GM12878 (cell line): ENCODE measurements at regions of chr17 and their contacts with region 1.

Region 1: DNA sequence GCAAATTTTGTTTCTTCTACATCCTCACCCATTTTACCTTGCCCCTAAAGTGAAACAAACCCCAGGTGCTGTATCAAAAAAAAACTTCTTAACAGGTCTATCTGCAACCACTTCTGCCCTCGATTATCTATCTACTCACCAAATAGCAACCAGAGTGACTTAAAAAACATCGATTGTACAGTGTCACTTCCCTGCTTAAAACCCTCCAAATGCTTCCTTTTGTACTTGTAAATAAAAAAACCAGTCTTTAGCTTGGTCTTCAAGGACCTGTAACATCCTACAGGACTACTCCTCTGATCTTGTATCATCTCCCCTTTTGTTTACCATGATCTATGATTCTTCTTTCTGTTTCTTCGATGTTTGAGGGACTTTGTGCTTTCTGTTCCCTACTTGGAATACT is 82.7 kb upstream of the CORO6 start:
- DNase-seq: no peak
- ATAC-seq: peak; percentile 7; the same call in 2 of the 3 replicates
- H3K4me3 ChIP-seq: peak overlapping the region; percentile 43; the same call in 1 of the 2 replicates
- H3K27ac ChIP-seq: peak overlapping the region; percentile 91
- H3K4me1 ChIP-seq: peaks cover 29% of the 10 kb centered on the region
- H3K27me3 ChIP-seq: no peaks in the 10 kb centered on the region
- CTCF ChIP-seq: no peak
- EP300 ChIP-seq: no peak
- POLR2A ChIP-seq: no peak
- RAD21 ChIP-seq: no peak

Region 2: DNA sequence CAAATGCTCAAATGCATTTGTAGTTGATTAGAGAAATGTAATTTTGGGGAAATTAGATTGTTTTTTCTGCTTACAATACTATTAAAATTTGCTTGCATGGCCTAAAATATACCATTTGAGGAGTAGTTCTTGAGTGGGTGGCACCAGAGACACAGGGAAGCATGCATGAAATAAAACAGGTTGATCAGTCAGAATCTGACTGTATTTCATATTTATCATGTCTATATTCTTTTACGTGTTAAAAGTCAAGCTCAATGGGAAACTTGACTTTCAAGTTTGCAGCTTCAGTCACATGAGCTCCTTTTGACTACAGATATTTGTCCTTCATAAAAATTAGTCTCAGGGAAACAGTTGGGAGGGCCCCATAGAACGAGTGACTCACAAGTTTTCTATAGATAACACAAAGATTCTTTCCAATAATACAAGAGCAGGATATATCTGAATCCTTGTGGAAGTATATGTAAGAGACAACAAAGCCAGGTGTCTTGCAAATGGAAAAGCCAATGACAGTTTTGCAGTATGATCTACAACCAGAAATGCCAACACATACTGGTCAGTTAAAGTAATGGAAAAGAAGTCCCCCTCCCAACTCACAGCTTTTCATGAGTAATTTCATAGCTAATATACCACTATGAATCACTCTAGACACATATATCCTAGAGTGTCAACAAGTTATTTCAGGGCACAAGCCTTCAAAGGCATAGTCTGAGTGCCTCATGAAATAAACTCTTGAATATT is 40.5 kb before region 1 on chr17:
- CTCF ChIA-PET with region 1: no interaction called
- POLR2A ChIA-PET with region 1: interaction called, 10 read pairs
- RAD21 ChIA-PET with region 1: interaction called, 4 read pairs
- SMC1A ChIA-PET with region 1: interaction called, 7 read pairs
- in situ Hi-C with region 1: no loop called
- intact Hi-C with region 1: no loop called
- DNase-seq: no peak
- ATAC-seq: peak; percentile 60
- H3K4me3 ChIP-seq: no peak overlapping the region
- H3K27ac ChIP-seq: peak overlapping the region; percentile 4
- H3K4me1 ChIP-seq: peaks cover 8% of the 10 kb centered on the region
- H3K27me3 ChIP-seq: no peaks in the 10 kb centered on the region
- CTCF ChIP-seq: no peak
- EP300 ChIP-seq: no peak
- POLR2A ChIP-seq: no peak
- RAD21 ChIP-seq: no peak

Region 3: GRCh38 chr17:29687596-29687995 is 17.8 kb before region 1 on chr17:
- CTCF ChIA-PET with region 1: interaction called, 18 read pairs
- POLR2A ChIA-PET with region 1: interaction called, 3 read pairs
- RAD21 ChIA-PET with region 1: interaction called, 8 read pairs
- SMC1A ChIA-PET with region 1: interaction called, 14 read pairs
- in situ Hi-C with region 1: no loop called
- intact Hi-C with region 1: no loop called
- DNase-seq: no peak
- ATAC-seq: no peak
- H3K4me3 ChIP-seq: no peak overlapping the region
- H3K27ac ChIP-seq: no peak overlapping the region
- H3K4me1 ChIP-seq: 0 out of 2 replicates have a peak, but pooled peaks cover 2% of the 10 kb centered on the region
- H3K27me3 ChIP-seq: no peaks in the 10 kb centered on the region
- CTCF ChIP-seq: no peak
- EP300 ChIP-seq: no peak
- POLR2A ChIP-seq: no peak
- RAD21 ChIP-seq: no peak

Region 4: DNA sequence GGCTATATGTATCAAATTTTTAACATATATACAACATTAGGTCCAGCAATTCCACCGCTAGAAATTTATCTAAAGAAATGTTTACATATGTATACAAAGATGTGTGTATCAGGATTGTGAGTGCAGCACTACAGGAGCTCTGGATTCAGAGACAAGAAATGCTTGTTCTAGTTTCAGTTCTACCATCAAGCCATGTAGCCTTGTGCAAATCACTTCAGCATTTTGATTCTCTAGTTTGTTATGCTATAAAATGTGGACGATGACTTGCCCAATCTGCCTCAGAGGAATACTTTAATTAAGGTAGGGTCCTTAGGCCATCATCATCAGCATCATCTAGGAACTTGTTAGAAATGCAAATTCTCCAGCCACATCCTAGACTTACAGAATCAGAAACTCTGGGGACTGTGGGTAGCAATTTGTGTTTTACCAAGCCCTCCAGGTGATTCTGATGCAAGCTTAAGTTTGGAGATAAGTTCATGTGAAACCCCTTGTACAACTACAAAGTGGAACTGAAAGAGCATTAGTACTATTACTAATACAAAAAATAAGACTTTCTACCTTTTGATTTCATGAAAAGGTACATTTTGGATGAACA is 48.6 kb after region 1 on chr17:
- CTCF ChIA-PET with region 1: interaction called, 7 read pairs
- POLR2A ChIA-PET with region 1: interaction called, 54 read pairs
- RAD21 ChIA-PET with region 1: interaction called, 65 read pairs
- SMC1A ChIA-PET with region 1: interaction called, 24 read pairs
- in situ Hi-C with region 1: no loop called
- intact Hi-C with region 1: no loop called
- DNase-seq: peak; percentile 61
- ATAC-seq: peak; percentile 81
- H3K4me3 ChIP-seq: no peak overlapping the region
- H3K27ac ChIP-seq: peak overlapping the region; percentile 21
- H3K4me1 ChIP-seq: peaks cover 32% of the 10 kb centered on the region
- H3K27me3 ChIP-seq: no peaks in the 10 kb centered on the region
- CTCF ChIP-seq: no peak
- EP300 ChIP-seq: no peak
- POLR2A ChIP-seq: no peak
- RAD21 ChIP-seq: no peak